ENCODE measurements at regions of chr15 and their contacts with region 1.

Region 1: DNA sequence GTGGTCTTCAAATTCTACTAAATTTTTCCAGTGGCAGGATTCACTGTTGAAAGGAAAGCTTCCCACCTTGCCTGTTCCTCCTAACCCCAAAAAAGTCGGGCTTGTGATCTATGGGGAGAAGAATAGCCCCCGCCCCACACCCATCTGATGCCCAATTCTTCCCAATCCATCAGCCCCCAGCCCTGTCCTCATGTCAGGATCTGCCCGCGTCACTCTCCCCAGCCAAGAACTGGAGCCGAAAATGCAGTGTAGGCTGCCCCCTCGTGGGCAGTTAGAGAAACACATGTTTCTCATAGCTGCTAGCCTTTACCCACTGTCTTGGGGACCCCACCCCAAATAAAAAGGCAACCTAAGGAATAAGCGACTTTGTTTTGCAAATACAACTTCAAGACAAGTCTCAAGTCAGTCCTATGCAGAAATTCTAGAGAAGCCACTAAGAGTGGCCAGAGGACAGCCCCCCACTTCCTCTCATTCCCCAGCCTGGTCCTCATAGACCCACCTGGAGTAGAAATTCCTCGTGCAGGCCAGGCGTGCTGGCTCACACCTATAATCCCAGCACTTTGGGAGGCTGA is 13.0 kb upstream of the CSK start:
- DNase-seq: peak; percentile 84
- H3K4me3 ChIP-seq: no peak overlapping the region; a peak in 1 of 4 replicates
- H3K27ac ChIP-seq: no peak overlapping the region
- H3K4me1 ChIP-seq: peaks cover 0 to 5% of the 10 kb centered on the region in 2 experiments; a peak in 1 of 4 replicates
- H3K27me3 ChIP-seq: peaks cover 8% of the 10 kb centered on the region; the same call in 1 of the 2 replicates
- CTCF ChIP-seq: peak; percentile 87
- EP300 ChIP-seq: no peak
- RAD21 ChIP-seq: peak; percentile 88

Region 2: GRCh38 chr15:74525946-74526345 is 242.9 kb before region 1 on chr15:
- CTCF ChIA-PET with region 1: no interaction called
- POLR2A ChIA-PET with region 1: no interaction called
- DNase-seq: no peak
- H3K4me3 ChIP-seq: no peak overlapping the region
- H3K27ac ChIP-seq: peak overlapping the region in 1 of 2 experiments; percentile 64; a peak in 2 of 4 replicates
- H3K4me1 ChIP-seq: peaks cover 0 to 13% of the 10 kb centered on the region in 2 experiments; a peak in 1 of 4 replicates
- H3K27me3 ChIP-seq: no peaks in the 10 kb centered on the region
- CTCF ChIP-seq: no peak
- EP300 ChIP-seq: peak in 1 of 2 experiments; percentile 57; a peak in 1 of 4 replicates
- RAD21 ChIP-seq: no peak

Region 3: DNA sequence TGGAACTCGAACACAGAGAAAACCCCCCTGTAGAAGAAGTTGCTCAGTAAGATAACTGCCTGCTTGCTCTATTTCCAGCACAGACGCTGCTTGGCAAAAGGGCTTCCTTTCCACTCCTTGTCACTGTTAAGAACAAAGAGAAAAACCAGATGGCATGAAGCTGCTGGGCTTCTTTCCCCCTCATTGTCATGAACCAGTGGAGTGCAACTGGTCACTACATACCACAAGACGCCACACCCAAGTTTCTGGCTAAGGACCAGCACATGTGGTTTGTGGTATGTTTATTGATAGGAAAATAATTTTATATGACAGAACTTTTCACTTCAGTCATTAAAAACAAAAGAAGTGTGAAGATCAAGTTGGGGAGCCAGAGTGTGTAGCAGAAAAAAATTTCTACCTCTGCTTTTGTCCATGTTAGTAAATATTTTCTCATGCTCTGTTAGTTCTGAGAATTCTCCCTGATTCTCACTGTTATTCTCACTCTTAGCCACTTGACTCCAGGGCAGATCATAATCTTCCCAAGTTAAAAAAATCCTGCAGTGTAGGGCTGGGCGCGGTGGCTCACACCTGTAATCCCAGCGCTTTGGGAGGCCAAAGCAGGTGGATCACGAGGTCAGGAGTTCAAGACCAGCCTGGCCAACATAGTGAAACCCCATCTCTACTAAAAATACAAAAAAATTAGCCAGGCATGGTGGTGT is 115.3 kb before region 1 on chr15:
- CTCF ChIA-PET with region 1: interaction called, 1,109 read pairs
- POLR2A ChIA-PET with region 1: no interaction called
- DNase-seq: peak; percentile 52
- H3K4me3 ChIP-seq: no peak overlapping the region
- H3K27ac ChIP-seq: peak overlapping the region; percentile 38 to 43; a peak in 2 of 4 replicates
- H3K4me1 ChIP-seq: peaks cover 0 to 30% of the 10 kb centered on the region in 2 experiments; a peak in 3 of 4 replicates
- H3K27me3 ChIP-seq: no peaks in the 10 kb centered on the region
- CTCF ChIP-seq: no peak
- EP300 ChIP-seq: peak; percentile 37 to 44; a peak in 2 of 4 replicates
- RAD21 ChIP-seq: no peak

Region 4: DNA sequence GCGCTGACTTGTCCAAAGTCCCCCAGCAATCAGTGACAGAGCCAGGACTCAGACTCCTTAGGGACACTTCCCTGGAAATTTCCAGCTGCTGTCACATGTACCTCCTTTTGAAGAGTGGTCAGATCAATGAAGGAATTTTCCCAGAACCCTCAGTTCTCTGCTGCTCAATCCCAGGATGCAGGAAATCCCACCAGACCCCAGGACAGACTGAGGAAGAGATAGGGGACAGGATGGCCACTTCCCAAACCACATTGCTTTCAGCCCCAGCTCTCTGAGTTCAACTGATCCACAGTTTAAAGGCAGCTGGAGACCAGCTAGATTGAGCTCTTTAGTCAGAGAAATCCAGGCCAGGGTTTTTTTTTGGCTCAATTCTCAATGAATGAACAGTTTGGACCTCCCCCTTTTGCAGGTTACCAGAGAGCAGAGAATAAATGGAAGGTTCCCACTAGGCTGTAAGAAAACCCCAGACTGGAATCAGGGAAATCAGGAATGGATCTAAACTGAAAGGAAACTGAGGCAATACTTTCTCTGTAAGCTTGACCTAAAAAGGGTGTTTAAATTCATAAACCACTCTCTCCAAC is 45.0 kb before region 1 on chr15:
- CTCF ChIA-PET with region 1: interaction called, 32 read pairs
- POLR2A ChIA-PET with region 1: no interaction called
- DNase-seq: peak; percentile 85
- H3K4me3 ChIP-seq: no peak overlapping the region
- H3K27ac ChIP-seq: no peak overlapping the region
- H3K4me1 ChIP-seq: peaks cover 0 to 7% of the 10 kb centered on the region in 2 experiments; a peak in 1 of 4 replicates
- H3K27me3 ChIP-seq: peaks cover 6% of the 10 kb centered on the region; the same call in 1 of the 2 replicates
- CTCF ChIP-seq: no peak
- EP300 ChIP-seq: no peak
- RAD21 ChIP-seq: no peak

Region 5: DNA sequence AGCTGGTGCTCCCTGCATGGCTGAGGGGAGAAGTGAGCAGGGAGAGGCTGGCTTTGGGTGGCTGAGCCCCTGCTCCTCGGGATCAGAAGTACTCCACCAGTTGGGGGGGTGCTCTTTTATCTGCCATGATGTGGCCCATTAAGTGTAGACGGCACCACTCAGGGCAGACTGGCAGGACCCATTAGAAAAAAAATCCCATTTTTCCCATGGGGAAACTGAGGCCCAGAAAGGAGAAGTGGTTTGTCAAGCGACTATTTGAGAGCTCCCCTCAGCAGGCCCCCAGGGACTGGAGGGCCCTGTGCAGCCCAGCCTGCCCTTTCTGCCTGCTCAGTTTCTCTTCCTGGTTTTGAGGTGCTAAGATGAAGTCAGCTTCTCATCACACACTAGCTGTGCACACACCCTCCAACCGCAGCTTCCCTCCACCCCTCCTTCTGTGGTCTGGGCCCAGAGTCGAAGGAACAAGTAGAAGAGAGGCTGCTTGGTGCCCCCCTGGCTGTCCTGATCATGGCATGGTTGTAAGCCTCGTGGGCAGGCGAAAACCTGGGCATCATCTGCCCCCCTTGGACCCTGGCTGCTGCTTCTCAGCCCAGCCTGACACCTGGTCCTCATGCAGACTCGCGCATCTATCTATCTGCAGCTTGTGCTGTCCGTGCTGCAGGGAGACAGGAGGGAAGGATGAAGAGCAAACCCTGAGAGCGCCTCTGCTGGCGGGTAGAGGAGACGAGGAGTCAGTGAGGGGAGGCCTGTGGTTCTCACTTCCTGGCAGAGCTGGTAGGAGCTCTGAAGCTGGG is 18.6 kb after region 1 on chr15:
- CTCF ChIA-PET with region 1: interaction called, 161 read pairs
- POLR2A ChIA-PET with region 1: no interaction called
- DNase-seq: peak; percentile 69
- H3K4me3 ChIP-seq: no peak overlapping the region; a peak in 1 of 4 replicates
- H3K27ac ChIP-seq: 0 out of 4 replicates have a peak overlapping the region, but pooled peaks of 1 of the 2 experiments have one; percentile 17
- H3K4me1 ChIP-seq: peaks cover 21 to 70% of the 10 kb centered on the region in 2 experiments
- H3K27me3 ChIP-seq: no peaks in the 10 kb centered on the region
- CTCF ChIP-seq: peak; percentile 55
- EP300 ChIP-seq: no peak
- RAD21 ChIP-seq: 0 out of 2 replicates have a peak, but pooled peaks have one; percentile 13

Region 6: GRCh38 chr15:74816808-74817674 is 48.2 kb after region 1 on chr15:
- CTCF ChIA-PET with region 1: interaction called, 31 read pairs
- POLR2A ChIA-PET with region 1: no interaction called
- DNase-seq: peak; percentile 69
- H3K4me3 ChIP-seq: no peak overlapping the region
- H3K27ac ChIP-seq: peak overlapping the region in 1 of 2 experiments; percentile 13; a peak in 1 of 4 replicates
- H3K4me1 ChIP-seq: peaks cover 0 to 38% of the 10 kb centered on the region in 2 experiments; a peak in 1 of 4 replicates
- H3K27me3 ChIP-seq: no peaks in the 10 kb centered on the region
- CTCF ChIP-seq: no peak
- EP300 ChIP-seq: no peak
- RAD21 ChIP-seq: 0 out of 2 replicates have a peak, but pooled peaks have one; percentile 12

Region 7: DNA sequence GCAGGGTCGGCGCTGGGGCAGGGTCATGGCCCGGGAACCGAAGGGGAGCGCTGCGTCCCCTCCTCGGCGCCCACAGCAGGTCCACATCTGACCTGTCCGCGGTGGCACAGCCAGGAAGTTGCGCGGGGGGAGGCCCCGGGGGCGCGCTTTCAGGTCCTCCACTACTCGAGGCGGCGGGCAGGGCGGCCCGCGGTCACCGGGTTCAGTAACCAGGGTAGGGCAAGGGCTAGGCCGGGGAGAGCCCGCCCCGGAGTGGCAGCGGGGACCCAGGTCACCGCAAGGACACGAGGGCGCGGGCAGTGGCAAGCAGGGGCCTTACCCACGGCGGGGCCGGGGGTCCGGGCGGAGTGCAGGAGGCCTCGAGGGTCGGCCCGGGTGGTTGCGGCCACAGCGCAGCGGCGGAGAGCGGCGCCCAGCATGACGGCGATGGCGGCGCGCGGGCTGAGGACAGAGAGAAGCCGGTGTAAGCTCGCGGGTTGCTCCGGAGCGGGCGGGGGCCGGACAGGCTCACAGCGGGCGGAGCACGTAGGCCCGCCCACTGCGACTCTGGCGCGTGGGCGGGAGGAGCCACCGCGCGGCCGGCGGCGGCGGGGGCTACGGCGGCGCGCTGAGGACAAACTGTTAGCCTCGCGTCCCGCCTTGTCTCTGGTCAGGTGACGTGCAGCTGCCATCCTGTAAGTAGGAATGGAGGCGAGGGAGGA is 168.9 kb after region 1 on chr15 and contains the start of gene COX5A:
- CTCF ChIA-PET with region 1: interaction called, 10 read pairs
- POLR2A ChIA-PET with region 1: interaction called, 3 read pairs
- DNase-seq: peak; percentile 96
- H3K4me3 ChIP-seq: peak within 1 kb of the TSS; percentile 72 to 90
- H3K27ac ChIP-seq: peak within 1 kb of the TSS; percentile 86 to 89
- H3K4me1 ChIP-seq: 0 out of 4 replicates have a peak, but pooled peaks cover 0 to 6% of the 10 kb centered on the region in 2 experiments
- H3K27me3 ChIP-seq: no peaks in the 10 kb centered on the region
- CTCF ChIP-seq: no peak
- EP300 ChIP-seq: peak in 1 of 2 experiments; percentile 57; a peak in 2 of 4 replicates
- RAD21 ChIP-seq: peak; percentile 17; the same call in 1 of the 2 replicates
- polyA plus RNA-seq, gene COX5A: 112 and 158 TPM in 2 replicates

Region 8: DNA sequence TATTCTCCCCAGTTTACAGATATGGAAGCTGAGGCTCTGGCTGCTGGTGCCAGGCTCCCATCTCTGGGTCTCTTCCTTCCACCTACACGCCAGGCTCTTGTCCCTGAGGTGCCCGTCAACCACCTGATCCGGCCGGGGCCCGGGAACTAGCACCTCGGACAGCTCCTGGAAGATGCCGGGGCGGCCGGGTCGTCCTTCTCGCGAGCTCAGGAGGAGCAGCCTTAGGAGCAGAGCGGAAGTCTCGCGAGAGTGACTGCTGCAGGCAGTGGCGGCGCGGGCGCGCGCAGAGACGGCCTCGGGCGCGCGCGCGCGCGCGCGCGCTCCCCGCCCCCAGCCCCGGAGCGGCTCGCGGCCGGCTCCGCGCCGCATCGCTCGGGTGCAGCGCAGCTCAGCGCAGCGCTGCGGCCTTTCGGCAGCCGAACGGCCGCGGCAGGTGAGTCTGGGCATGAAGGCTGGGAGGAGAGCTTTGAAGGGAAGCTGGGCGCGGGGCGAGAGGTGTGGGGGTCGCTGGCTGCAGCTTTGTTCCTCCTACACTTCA is 226.5 kb after region 1 on chr15 and contains the start of gene SCAMP5:
- CTCF ChIA-PET with region 1: interaction called, 10 read pairs
- POLR2A ChIA-PET with region 1: no interaction called
- DNase-seq: peak; percentile 97
- H3K4me3 ChIP-seq: peak within 1 kb of the TSS; percentile 67 to 84
- H3K27ac ChIP-seq: peak within 1 kb of the TSS in 1 of 2 experiments; percentile 90; a peak in 2 of 4 replicates
- H3K4me1 ChIP-seq: peaks cover 0 to 17% of the 10 kb centered on the region in 2 experiments; a peak in 1 of 4 replicates
- H3K27me3 ChIP-seq: no peaks in the 10 kb centered on the region
- CTCF ChIP-seq: no peak
- EP300 ChIP-seq: 0 out of 4 replicates have a peak, but pooled peaks of 1 of the 2 experiments have one; percentile 2
- RAD21 ChIP-seq: no peak
- polyA plus RNA-seq, gene SCAMP5: 27.9 and 32.7 TPM in 2 replicates

Region 9: GRCh38 chr15:75023181-75023871 is 254.5 kb after region 1 on chr15 and contains the start of gene PPCDC:
- CTCF ChIA-PET with region 1: no interaction called
- POLR2A ChIA-PET with region 1: no interaction called
- DNase-seq: peak; percentile 97
- H3K4me3 ChIP-seq: peak within 1 kb of the TSS; percentile 94 to 97
- H3K27ac ChIP-seq: peak within 1 kb of the TSS; percentile 63 to 89
- H3K4me1 ChIP-seq: peaks cover 0 to 6% of the 10 kb centered on the region in 2 experiments; a peak in 1 of 4 replicates
- H3K27me3 ChIP-seq: no peaks in the 10 kb centered on the region
- CTCF ChIP-seq: no peak
- EP300 ChIP-seq: no peak
- RAD21 ChIP-seq: no peak
- polyA plus RNA-seq, gene PPCDC: 19.8 and 20.7 TPM in 2 replicates